ENCODE measurements at regions of chr7 and their contacts with region 1.

Region 1: DNA sequence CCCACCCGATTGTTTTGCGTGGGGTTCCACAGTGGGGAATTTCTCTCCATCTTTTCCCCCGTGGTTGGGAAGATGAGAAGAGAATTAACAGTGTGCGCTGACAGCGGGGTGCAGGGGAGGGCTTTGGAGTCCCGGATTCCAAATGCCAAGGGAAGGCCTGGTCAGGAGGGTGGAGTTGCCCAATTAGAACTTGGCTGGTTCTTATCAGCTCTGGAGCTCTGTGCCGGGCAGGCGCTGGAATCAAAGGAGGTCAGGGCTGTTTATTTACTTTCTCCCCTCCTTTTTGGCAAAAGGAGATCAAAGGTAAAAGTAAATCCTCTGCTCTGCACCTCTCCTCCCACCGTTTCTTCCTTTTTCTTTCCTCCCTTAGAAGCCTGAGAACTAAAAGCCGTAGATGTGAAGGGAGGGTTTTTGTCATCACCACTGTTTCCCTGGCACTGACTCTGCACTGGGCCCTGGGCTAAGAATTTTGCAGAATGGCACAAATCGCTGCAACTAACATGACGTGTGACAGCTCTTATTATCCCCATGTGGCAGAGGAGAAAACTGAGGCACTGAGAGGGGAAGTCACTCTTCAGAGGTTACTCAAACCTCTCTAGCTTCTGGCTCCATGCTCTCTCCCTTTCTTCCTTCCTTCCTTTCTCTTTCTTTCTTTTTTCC is 95.2 kb upstream of the ZNF716 start:
- DNase-seq: no peak
- H3K4me3 ChIP-seq: no peak overlapping the region
- H3K27ac ChIP-seq: no peak overlapping the region
- H3K4me1 ChIP-seq: no peaks in the 10 kb centered on the region
- H3K27me3 ChIP-seq: no peaks in the 10 kb centered on the region
- CTCF ChIP-seq: no peak
- EP300 ChIP-seq: no peak
- POLR2A ChIP-seq: no peak

Region 2: GRCh38 chr7:57305192-57305748 is 49.5 kb before region 1 on chr7:
- intact Hi-C with region 1: loop called (anchors 10 kb)
- DNase-seq: no peak
- H3K4me3 ChIP-seq: no peak overlapping the region
- H3K27ac ChIP-seq: no peak overlapping the region
- H3K4me1 ChIP-seq: no peaks in the 10 kb centered on the region
- H3K27me3 ChIP-seq: no peaks in the 10 kb centered on the region
- CTCF ChIP-seq: no peak
- EP300 ChIP-seq: no peak
- POLR2A ChIP-seq: no peak

Measured in stomach (tissue), 19 donors.